CD4-positive, alpha-beta T cell (primary cell): ENCODE measurements at regions of chrX and their contacts with region 1.

Region 1: DNA sequence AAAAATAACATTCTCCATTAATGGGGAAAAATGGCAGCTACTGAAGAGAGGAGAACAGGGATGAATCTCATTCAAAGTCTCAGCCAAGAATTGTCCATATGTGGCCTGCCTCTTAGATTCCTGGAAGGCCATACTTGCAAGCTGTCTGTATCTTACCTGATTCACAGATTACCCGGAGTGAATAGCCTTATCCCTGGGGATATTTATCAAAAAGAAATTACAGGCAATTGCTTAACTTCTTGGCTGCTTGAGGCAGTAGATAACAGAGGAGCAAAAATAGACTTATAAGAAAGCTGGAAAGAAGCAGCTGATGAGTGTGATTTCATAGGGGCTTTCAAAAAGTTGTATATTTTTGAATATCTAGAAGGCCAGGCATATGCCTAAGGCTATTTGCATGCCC is 68.8 kb upstream of the PPP1R2C start:
- DNase-seq: no peak
- ATAC-seq: no peak
- H3K4me3 ChIP-seq: no peak overlapping the region
- H3K4me3 Mint-ChIP-seq: no peak overlapping the region
- H3K27ac ChIP-seq: no peak overlapping the region
- H3K27ac Mint-ChIP-seq: no peak overlapping the region
- H3K4me1 ChIP-seq: no peaks in the 10 kb centered on the region
- H3K4me1 Mint-ChIP-seq: no peaks in the 10 kb centered on the region
- H3K27me3 ChIP-seq: no peaks in the 10 kb centered on the region
- H3K27me3 Mint-ChIP-seq: no peaks in the 10 kb centered on the region
- CTCF ChIP-seq: no peak

Region 2: GRCh38 chrX:42776195-42776594 is 70.5 kb before region 1 on chrX:
- CTCF ChIA-PET with region 1: no interaction called
- POLR2A ChIA-PET with region 1: no interaction called
- intact Hi-C with region 1: loop called in 1 of 2 experiments (anchors 5 kb)
- DNase-seq: peak in 1 of 14 experiments; percentile 0
- ATAC-seq: no peak
- H3K4me3 ChIP-seq: no peak overlapping the region
- H3K4me3 Mint-ChIP-seq: no peak overlapping the region
- H3K27ac ChIP-seq: no peak overlapping the region
- H3K27ac Mint-ChIP-seq: no peak overlapping the region
- H3K4me1 ChIP-seq: no peaks in the 10 kb centered on the region
- H3K4me1 Mint-ChIP-seq: peaks cover 14% of the 10 kb centered on the region
- H3K27me3 ChIP-seq: no peaks in the 10 kb centered on the region
- H3K27me3 Mint-ChIP-seq: no peaks in the 10 kb centered on the region
- CTCF ChIP-seq: no peak